ENCODE measurements at regions of chr4 and their contacts with region 1.

Region 1: GRCh38 chr4:2560167-2560566 is 23.7 kb downstream of the FAM193A start:
- DNase-seq: no peak
- H3K4me3 ChIP-seq: no peak overlapping the region
- H3K4me3 Mint-ChIP-seq: no peak overlapping the region
- H3K27ac Mint-ChIP-seq: peak overlapping the region; percentile 15
- H3K4me1 ChIP-seq: no peaks in the 10 kb centered on the region
- H3K4me1 Mint-ChIP-seq: no peaks in the 10 kb centered on the region
- H3K27me3 ChIP-seq: no peaks in the 10 kb centered on the region
- H3K27me3 Mint-ChIP-seq: no peaks in the 10 kb centered on the region
- CTCF ChIP-seq: no peak

Region 2: GRCh38 chr4:2624782-2625530 is 64.8 kb after region 1 on chr4:
- CTCF ChIA-PET with region 1: no interaction called
- POLR2A ChIA-PET with region 1: no interaction called
- intact Hi-C with region 1: no loop called
- DNase-seq: no peak
- H3K4me3 ChIP-seq: no peak overlapping the region
- H3K4me3 Mint-ChIP-seq: no peak overlapping the region
- H3K27ac Mint-ChIP-seq: peak overlapping the region; percentile 16
- H3K4me1 ChIP-seq: no peaks in the 10 kb centered on the region
- H3K4me1 Mint-ChIP-seq: no peaks in the 10 kb centered on the region
- H3K27me3 ChIP-seq: no peaks in the 10 kb centered on the region
- H3K27me3 Mint-ChIP-seq: no peaks in the 10 kb centered on the region
- CTCF ChIP-seq: no peak

Region 3: GRCh38 chr4:2702361-2702760 is 142.2 kb after region 1 on chr4:
- CTCF ChIA-PET with region 1: no interaction called
- POLR2A ChIA-PET with region 1: interaction called, 11 read pairs
- intact Hi-C with region 1: no loop called
- DNase-seq: no peak
- H3K4me3 ChIP-seq: no peak overlapping the region
- H3K4me3 Mint-ChIP-seq: no peak overlapping the region
- H3K27ac Mint-ChIP-seq: no peak overlapping the region
- H3K4me1 ChIP-seq: no peaks in the 10 kb centered on the region
- H3K4me1 Mint-ChIP-seq: no peaks in the 10 kb centered on the region
- H3K27me3 ChIP-seq: no peaks in the 10 kb centered on the region
- H3K27me3 Mint-ChIP-seq: no peaks in the 10 kb centered on the region
- CTCF ChIP-seq: no peak